Panc1 (cell line): ENCODE measurements at regions of chr20 and their contacts with region 1.

Region 1: GRCh38 chr20:41232973-41233926 is 84.3 kb downstream of the ZHX3 start:
- DNase-seq: no peak
- ATAC-seq: peak; percentile 80
- H3K4me3 ChIP-seq: peak overlapping the region in 1 of 2 experiments; percentile 21; a peak in 1 of 4 replicates
- H3K27ac ChIP-seq: no peak overlapping the region
- H3K4me1 ChIP-seq: no peaks in the 10 kb centered on the region
- H3K27me3 ChIP-seq: no peaks in the 10 kb centered on the region
- CTCF ChIP-seq: no peak

Region 2: DNA sequence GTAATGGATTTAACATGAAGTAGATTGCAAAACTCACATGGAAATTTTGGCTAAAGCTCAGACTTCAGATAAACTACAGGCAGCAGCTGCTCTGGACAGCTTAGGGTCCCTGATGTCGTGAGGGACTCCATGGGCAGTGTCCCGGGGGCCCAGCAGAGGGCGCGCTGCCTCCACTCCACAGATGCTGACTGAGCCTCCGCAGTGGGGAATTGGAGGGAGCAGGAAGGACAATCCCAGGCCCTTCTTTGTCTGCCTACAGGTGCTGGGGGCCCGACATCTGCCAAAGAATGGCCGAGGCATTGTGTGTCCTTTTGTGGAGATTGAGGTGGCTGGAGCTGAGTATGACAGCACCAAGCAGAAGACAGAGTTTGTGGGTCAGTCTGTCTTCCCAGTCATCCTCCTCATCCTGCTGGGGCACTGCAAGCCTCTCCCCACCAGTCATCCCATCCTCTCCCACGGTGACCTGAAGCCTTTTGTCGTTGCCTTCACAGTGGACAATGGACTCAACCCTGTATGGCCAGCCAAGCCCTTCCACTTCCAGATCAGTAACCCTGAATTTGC is 60.0 kb before region 1 on chr20:
- CTCF ChIA-PET with region 1: interaction called, 8 read pairs
- POLR2A ChIA-PET with region 1: no interaction called
- in situ Hi-C with region 1: no loop called
- intact Hi-C with region 1: loop called (anchors 5 kb)
- DNase-seq: peak; percentile 18
- ATAC-seq: peak; percentile 92
- H3K4me3 ChIP-seq: no peak overlapping the region
- H3K27ac ChIP-seq: no peak overlapping the region
- H3K4me1 ChIP-seq: no peaks in the 10 kb centered on the region
- H3K27me3 ChIP-seq: no peaks in the 10 kb centered on the region
- CTCF ChIP-seq: peak; percentile 95